Caco-2 (cell line): ENCODE measurements at regions of chr22 and their contacts with region 1.

Region 1: GRCh38 chr22:49434101-49434611 is 393.5 kb downstream of the BRD1 start:
- DNase-seq: peak; percentile 57 to 64
- H3K4me3 ChIP-seq: no peak overlapping the region
- H3K4me3 Mint-ChIP-seq: no peak overlapping the region
- H3K27ac Mint-ChIP-seq: no peak overlapping the region
- H3K4me1 ChIP-seq: no peaks in the 10 kb centered on the region
- H3K4me1 Mint-ChIP-seq: no peaks in the 10 kb centered on the region
- H3K27me3 ChIP-seq: no peaks in the 10 kb centered on the region
- H3K27me3 Mint-ChIP-seq: peaks cover 14% of the 10 kb centered on the region
- CTCF ChIP-seq: peak; percentile 59 to 70

Region 2: DNA sequence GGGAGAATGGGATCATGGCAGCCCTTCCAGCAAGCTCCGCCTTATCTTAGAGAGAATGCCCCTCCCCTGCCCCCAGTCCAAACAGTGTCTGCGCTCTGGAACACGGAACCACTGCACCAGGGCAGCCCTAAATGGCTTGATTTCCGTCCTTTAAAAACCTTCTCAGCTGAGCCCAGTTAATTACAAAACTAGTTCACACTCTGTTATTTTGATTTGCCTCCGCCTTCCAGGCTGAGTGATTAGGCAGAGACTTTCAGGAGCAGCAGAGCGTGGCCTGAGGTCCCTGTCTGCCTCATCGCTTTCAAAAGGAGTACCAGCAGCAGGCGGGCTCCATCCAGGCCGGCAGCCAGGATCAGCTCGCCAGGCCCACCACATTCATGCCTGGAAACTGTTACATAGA is 80.5 kb after region 1 on chr22:
- CTCF ChIA-PET with region 1: no interaction called
- POLR2A ChIA-PET with region 1: no interaction called
- intact Hi-C with region 1: no loop called
- DNase-seq: no peak
- H3K4me3 ChIP-seq: no peak overlapping the region
- H3K4me3 Mint-ChIP-seq: no peak overlapping the region
- H3K27ac Mint-ChIP-seq: no peak overlapping the region
- H3K4me1 ChIP-seq: no peaks in the 10 kb centered on the region
- H3K4me1 Mint-ChIP-seq: no peaks in the 10 kb centered on the region
- H3K27me3 ChIP-seq: no peaks in the 10 kb centered on the region
- H3K27me3 Mint-ChIP-seq: peaks cover 5% of the 10 kb centered on the region
- CTCF ChIP-seq: no peak

Region 3: GRCh38 chr22:49632199-49633009 is 198.2 kb after region 1 on chr22:
- CTCF ChIA-PET with region 1: interaction called, 31 read pairs
- POLR2A ChIA-PET with region 1: no interaction called
- intact Hi-C with region 1: loop called (anchors 1 kb)
- DNase-seq: peak; percentile 63 to 80
- H3K4me3 ChIP-seq: peak overlapping the region; percentile 32
- H3K4me3 Mint-ChIP-seq: peak overlapping the region; percentile 56
- H3K27ac Mint-ChIP-seq: no peak overlapping the region
- H3K4me1 ChIP-seq: no peaks in the 10 kb centered on the region
- H3K4me1 Mint-ChIP-seq: no peaks in the 10 kb centered on the region
- H3K27me3 ChIP-seq: no peaks in the 10 kb centered on the region
- H3K27me3 Mint-ChIP-seq: peaks cover 10% of the 10 kb centered on the region
- CTCF ChIP-seq: peak; percentile 91 to 97

Region 4: GRCh38 chr22:49724893-49725474 is 290.8 kb after region 1 on chr22:
- CTCF ChIA-PET with region 1: no interaction called
- POLR2A ChIA-PET with region 1: no interaction called
- intact Hi-C with region 1: loop called (anchors 10 kb)
- DNase-seq: peak; percentile 59 to 80
- H3K4me3 ChIP-seq: peak overlapping the region; percentile 25
- H3K4me3 Mint-ChIP-seq: peak overlapping the region; percentile 50
- H3K27ac Mint-ChIP-seq: no peak overlapping the region
- H3K4me1 ChIP-seq: no peaks in the 10 kb centered on the region
- H3K4me1 Mint-ChIP-seq: no peaks in the 10 kb centered on the region
- H3K27me3 ChIP-seq: peaks cover 1% of the 10 kb centered on the region
- H3K27me3 Mint-ChIP-seq: peaks cover 36% of the 10 kb centered on the region
- CTCF ChIP-seq: peak; percentile 67 to 79